Activated CD4-positive, alpha-beta T cell treated with anti-CD3 and anti-CD28 coated beads for 36 hours (primary cell): ENCODE measurements at regions of chr9 and their contacts with region 1.

Region 1: GRCh38 chr9:35116898-35117551 is 1.4 kb upstream of the ATOSB start:
- DNase-seq: peak; percentile 94
- ATAC-seq: peak; percentile 66
- H3K4me3 Mint-ChIP-seq: peak overlapping the region; percentile 77
- H3K27ac Mint-ChIP-seq: peak overlapping the region; percentile 87
- H3K4me1 Mint-ChIP-seq: peaks cover 44% of the 10 kb centered on the region
- H3K27me3 Mint-ChIP-seq: no peaks in the 10 kb centered on the region

Region 2: DNA sequence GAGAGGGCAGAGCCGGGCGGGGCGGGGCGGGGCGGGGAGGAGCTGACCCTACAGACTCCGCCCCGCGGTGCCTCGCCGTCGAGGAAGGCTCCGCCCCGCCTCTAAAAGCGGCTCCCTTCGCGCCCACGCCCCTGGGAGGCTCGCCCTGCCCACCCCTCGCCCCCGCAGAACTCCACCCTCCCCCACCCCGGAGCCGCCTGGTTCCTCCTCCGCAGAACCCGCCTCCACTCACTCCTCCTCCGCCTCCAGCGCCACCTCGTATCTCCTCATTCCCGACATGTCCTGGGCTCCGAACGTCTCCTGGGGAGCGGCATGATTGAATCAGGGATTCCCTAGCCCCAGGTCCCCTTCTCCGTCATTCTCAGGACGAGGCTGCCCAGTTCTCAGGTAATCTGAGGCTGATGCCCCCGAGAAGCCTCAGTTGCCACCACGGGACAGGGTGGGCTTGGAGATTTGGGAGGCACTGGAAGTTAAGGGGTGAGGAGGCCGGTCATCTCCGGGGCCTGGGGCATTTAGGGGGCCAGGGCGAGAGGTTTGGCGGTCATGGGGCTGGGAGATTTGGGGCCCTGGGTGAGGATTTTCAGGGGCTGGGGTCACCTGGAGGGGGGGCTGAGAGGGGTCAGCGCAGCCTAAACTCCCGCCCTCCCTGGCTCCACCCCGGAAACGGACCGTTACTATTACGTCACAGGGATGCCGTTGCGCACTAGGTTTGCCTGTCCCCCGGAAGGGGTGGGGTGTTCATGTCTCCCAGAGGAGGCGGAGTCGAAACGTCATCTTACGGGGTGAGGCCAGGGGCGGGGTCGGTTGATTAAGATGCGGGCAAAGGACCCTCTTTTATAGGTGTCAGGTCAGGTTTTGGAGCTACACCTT is 451.4 kb before region 1 on chr9:
- CTCF ChIA-PET with region 1: no interaction called
- POLR2A ChIA-PET with region 1: no interaction called
- intact Hi-C with region 1: loop called in 1 of 2 experiments (anchors 1 kb)
- DNase-seq: peak; percentile 93
- ATAC-seq: peak; percentile 75
- H3K4me3 Mint-ChIP-seq: peak overlapping the region; percentile 77
- H3K27ac Mint-ChIP-seq: peak overlapping the region; percentile 87
- H3K4me1 Mint-ChIP-seq: peaks cover 33% of the 10 kb centered on the region
- H3K27me3 Mint-ChIP-seq: no peaks in the 10 kb centered on the region

Region 3: GRCh38 chr9:34876096-34876495 is 240.9 kb before region 1 on chr9:
- CTCF ChIA-PET with region 1: no interaction called
- POLR2A ChIA-PET with region 1: no interaction called
- intact Hi-C with region 1: no loop called
- DNase-seq: no peak
- ATAC-seq: no peak
- H3K4me3 Mint-ChIP-seq: no peak overlapping the region
- H3K27ac Mint-ChIP-seq: no peak overlapping the region
- H3K4me1 Mint-ChIP-seq: no peaks in the 10 kb centered on the region
- H3K27me3 Mint-ChIP-seq: peaks cover 22% of the 10 kb centered on the region

Region 4: DNA sequence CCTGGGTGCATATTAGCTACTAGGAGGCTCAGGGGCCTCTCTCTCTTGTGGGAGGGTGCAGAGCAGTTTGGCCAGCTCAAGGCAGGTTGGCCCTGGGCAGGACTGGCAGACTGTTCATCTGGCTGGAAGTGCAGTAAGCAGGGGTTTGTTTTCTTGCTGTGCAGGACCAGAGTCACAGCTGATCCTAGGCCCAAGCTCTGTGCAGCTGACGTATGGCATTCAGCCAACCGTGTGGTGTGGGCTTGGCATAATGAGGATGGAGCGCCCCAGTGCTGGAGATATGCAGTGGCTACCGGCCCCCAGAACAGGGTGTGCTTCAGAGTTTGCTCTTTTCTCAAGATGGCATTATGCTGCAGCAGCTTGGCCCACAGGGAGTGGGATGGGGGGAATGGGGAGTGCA is 190.0 kb before region 1 on chr9:
- CTCF ChIA-PET with region 1: no interaction called
- POLR2A ChIA-PET with region 1: no interaction called
- intact Hi-C with region 1: no loop called
- DNase-seq: no peak
- ATAC-seq: no peak
- H3K4me3 Mint-ChIP-seq: no peak overlapping the region
- H3K27ac Mint-ChIP-seq: no peak overlapping the region
- H3K4me1 Mint-ChIP-seq: peaks cover 14% of the 10 kb centered on the region
- H3K27me3 Mint-ChIP-seq: peaks cover 12% of the 10 kb centered on the region

Region 5: GRCh38 chr9:35096035-35096849 is 20.8 kb before region 1 on chr9 and contains the start of gene PIGO:
- CTCF ChIA-PET with region 1: interaction called, 5 read pairs
- POLR2A ChIA-PET with region 1: no interaction called
- intact Hi-C with region 1: loop called in 1 of 2 experiments (anchors 1 kb)
- DNase-seq: peak; percentile 95
- ATAC-seq: peak; percentile 91
- H3K4me3 Mint-ChIP-seq: peak within 1 kb of the TSS; percentile 85
- H3K27ac Mint-ChIP-seq: peak within 1 kb of the TSS; percentile 92
- H3K4me1 Mint-ChIP-seq: peaks cover 25% of the 10 kb centered on the region
- H3K27me3 Mint-ChIP-seq: no peaks in the 10 kb centered on the region
- total RNA-seq, gene PIGO: 21.0 to 27.2 TPM

Region 6: DNA sequence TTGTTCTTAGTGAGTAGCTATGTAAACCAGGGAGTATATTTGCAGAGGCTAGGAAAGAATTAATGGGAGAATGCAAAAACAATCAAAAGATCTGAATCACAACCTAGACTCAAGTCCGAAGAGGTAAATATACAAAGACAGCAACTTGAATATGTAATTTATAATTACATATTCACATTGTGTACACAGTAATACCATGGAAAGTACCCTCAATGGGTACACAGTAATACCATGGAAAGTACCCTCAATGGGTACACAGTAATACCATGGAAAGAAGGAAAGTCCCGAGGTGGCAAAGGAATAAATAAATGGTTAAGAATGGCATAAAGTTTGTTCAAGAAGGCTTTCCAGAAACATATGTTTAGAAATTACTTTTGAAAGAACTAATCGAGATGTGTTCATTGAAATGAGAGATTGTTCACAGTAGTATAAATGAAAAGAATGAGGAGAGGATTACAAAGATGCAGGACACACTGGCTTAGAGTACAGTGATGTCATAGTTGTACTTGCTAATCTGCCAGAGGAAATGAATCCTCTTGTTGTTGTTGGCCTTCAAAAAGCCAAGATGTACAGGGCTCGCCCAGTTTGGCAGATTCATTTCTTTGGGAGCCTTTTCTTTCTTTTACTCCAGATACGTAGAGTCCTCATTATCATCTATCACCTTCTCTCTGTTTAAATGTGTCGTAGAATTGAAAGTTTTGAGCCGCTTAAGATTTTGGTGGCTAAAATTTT is 160.8 kb after region 1 on chr9:
- CTCF ChIA-PET with region 1: no interaction called
- POLR2A ChIA-PET with region 1: no interaction called
- intact Hi-C with region 1: loop called in 1 of 2 experiments (anchors 5 kb)
- DNase-seq: no peak
- ATAC-seq: peak; percentile 47
- H3K4me3 Mint-ChIP-seq: no peak overlapping the region
- H3K27ac Mint-ChIP-seq: no peak overlapping the region
- H3K4me1 Mint-ChIP-seq: peaks cover 28% of the 10 kb centered on the region
- H3K27me3 Mint-ChIP-seq: no peaks in the 10 kb centered on the region

Region 7: DNA sequence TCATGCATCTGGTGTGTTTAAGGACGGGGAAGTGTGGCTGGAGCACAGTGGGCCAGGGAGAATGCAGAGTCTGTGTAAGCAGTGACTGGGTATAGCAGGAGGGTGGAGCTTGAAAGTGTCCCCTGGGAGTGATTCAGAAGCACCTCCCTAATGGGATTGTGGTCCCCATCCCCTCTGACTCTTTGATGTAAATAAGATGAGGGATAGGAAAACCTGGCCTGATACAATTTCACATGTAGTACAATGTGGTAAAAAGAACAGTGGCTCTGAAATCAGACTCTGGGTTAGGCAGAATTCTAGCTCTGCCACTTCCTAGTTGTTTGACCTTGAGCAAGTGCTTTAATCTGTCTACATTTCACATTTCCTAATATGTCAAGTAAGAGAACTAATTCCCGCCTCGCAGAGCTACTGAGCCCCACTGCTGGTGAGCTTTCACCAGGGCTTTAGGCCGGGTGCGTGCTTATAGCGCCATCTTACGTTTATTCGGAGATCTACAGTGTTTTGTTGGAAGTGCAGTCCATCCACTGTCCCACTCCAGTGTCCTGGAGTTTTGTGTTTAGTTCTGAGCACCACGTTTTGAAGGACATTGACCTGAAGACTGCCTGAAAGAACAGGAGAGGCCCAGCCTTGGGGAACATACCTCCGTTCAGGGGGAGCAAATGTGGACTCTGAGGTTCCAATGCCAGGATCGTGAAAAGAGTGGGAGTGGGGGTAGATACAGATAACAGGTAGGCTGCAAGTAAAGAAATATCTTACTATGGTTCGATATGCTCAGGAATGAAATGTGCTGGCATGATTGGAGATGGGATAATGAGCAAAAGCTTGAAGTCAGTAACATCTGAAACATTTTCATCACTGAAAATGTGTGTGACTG is 436.9 kb after region 1 on chr9:
- CTCF ChIA-PET with region 1: interaction called, 16 read pairs
- POLR2A ChIA-PET with region 1: interaction called, 3 read pairs
- intact Hi-C with region 1: loop called (anchors 1 to 5 kb)
- DNase-seq: peak; percentile 69
- ATAC-seq: peak; percentile 86
- H3K4me3 Mint-ChIP-seq: no peak overlapping the region
- H3K27ac Mint-ChIP-seq: no peak overlapping the region
- H3K4me1 Mint-ChIP-seq: no peaks in the 10 kb centered on the region
- H3K27me3 Mint-ChIP-seq: no peaks in the 10 kb centered on the region

Region 8: GRCh38 chr9:36190388-36191287 is 1073.6 kb after region 1 on chr9 and contains the start of gene CLTA:
- CTCF ChIA-PET with region 1: no interaction called
- POLR2A ChIA-PET with region 1: no interaction called
- intact Hi-C with region 1: loop called in 1 of 2 experiments (anchors 10 kb)
- DNase-seq: peak; percentile 96
- ATAC-seq: peak; percentile 99
- H3K4me3 Mint-ChIP-seq: peak within 1 kb of the TSS; percentile 95
- H3K27ac Mint-ChIP-seq: peak within 1 kb of the TSS; percentile 88
- H3K4me1 Mint-ChIP-seq: peaks cover 45% of the 10 kb centered on the region
- H3K27me3 Mint-ChIP-seq: no peaks in the 10 kb centered on the region
- total RNA-seq, gene CLTA: 123 to 133 TPM